MCF 10A (cell line): ENCODE measurements at regions of chr12 and their contacts with region 1.

Region 1: DNA sequence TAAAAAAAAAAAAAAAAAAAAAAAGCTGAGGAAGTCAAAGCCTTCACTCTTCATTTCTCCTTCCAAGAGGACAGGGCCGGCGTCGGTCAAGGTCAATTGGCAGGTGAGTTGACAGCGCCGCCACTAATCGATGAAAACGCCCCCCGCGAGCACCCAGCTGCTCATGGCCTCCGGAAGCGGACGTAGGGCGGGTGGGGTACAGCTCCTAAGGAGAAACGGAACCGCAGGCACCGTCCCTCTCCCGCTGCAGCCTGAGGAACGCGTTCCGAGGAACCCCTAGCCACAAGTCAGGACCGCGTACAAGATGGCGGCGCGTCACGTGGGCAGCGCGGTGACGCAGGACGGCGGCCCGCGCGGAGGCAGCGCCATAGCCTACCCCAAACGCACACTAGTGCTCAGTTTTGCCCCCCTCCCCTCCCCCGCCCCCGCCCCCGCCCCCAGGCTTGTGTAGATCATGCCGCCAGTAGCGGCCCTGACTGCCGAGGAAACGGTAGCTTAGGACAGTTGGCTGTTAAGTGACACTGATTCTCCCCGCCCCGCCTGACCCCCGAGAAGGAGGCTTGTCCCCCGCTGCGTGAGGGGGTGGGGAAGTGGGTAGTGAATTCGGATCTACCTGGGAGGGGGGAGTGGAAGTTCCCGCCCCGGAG is at the start of gene ATF1:
- DNase-seq: peak; percentile 90
- H3K4me3 Mint-ChIP-seq: peak within 1 kb of the TSS; percentile 87
- H3K27ac Mint-ChIP-seq: peak within 1 kb of the TSS; percentile 99
- H3K4me1 Mint-ChIP-seq: peaks cover 20% of the 10 kb centered on the region
- H3K27me3 Mint-ChIP-seq: no peaks in the 10 kb centered on the region
- CTCF ChIP-seq: no peak
- total RNA-seq, gene ATF1: 73.1 and 87.2 TPM in 2 replicates

Region 2: DNA sequence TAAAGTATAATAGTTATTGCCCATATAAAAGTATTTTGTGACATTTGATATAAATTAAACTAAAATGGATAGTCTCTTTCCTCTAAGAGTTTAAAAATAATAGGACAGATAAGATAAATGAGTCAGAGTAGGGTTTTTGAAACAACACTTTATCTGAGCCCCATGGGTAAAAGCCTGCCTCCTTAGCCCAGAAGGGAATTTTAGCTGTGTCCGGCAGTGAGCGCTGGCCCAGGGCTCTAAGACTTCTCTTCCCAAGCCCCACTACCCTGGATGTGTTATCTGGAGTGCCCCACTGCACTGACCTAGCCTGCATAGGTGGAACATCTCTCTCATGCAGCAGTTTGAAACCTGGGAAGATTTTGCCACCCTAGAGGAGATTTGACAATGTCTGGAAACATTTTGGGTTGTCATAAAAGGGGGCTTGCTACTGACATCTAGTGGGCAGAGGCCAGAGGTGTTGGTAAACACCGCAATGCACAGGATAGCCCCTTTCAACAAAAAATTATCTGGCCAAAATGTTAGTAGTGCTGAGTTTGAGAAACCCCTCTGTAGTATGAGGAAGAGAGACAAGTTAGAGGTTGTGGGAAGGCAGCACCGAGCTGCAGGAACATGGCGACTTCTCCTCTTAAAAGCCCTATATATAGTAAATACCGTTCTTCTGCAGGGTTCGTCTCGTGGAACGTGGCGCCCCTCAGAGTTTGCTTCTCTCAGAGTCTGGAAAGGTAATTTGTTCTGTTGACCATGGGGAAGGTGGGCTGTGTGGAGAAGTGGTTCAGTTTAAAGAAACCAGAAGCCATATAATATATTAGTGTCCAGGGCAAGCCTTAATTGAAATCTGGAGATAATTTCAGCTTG is 29.1 kb before region 1 on chr12:
- CTCF ChIA-PET with region 1: no interaction called
- POLR2A ChIA-PET with region 1: interaction called, 19 read pairs
- intact Hi-C with region 1: no loop called
- DNase-seq: peak; percentile 51
- H3K4me3 Mint-ChIP-seq: no peak overlapping the region
- H3K27ac Mint-ChIP-seq: no peak overlapping the region
- H3K4me1 Mint-ChIP-seq: peaks cover 14% of the 10 kb centered on the region
- H3K27me3 Mint-ChIP-seq: no peaks in the 10 kb centered on the region
- CTCF ChIP-seq: peak; percentile 59

Region 3: GRCh38 chr12:50786498-50787231 is 22.9 kb after region 1 on chr12:
- CTCF ChIA-PET with region 1: interaction called, 24 read pairs
- POLR2A ChIA-PET with region 1: interaction called, 149 read pairs
- intact Hi-C with region 1: no loop called
- DNase-seq: peak; percentile 98
- H3K4me3 Mint-ChIP-seq: peak overlapping the region; percentile 9
- H3K27ac Mint-ChIP-seq: peak overlapping the region; percentile 96
- H3K4me1 Mint-ChIP-seq: peaks cover 63% of the 10 kb centered on the region
- H3K27me3 Mint-ChIP-seq: no peaks in the 10 kb centered on the region
- CTCF ChIP-seq: no peak

Region 4: GRCh38 chr12:50820177-50820576 is 56.4 kb after region 1 on chr12:
- CTCF ChIA-PET with region 1: interaction called, 41 read pairs
- POLR2A ChIA-PET with region 1: interaction called, 43 read pairs
- intact Hi-C with region 1: loop called (anchors 1 kb)
- DNase-seq: no peak
- H3K4me3 Mint-ChIP-seq: no peak overlapping the region
- H3K27ac Mint-ChIP-seq: no peak overlapping the region
- H3K4me1 Mint-ChIP-seq: peaks cover 5% of the 10 kb centered on the region
- H3K27me3 Mint-ChIP-seq: no peaks in the 10 kb centered on the region
- CTCF ChIP-seq: no peak

Region 5: DNA sequence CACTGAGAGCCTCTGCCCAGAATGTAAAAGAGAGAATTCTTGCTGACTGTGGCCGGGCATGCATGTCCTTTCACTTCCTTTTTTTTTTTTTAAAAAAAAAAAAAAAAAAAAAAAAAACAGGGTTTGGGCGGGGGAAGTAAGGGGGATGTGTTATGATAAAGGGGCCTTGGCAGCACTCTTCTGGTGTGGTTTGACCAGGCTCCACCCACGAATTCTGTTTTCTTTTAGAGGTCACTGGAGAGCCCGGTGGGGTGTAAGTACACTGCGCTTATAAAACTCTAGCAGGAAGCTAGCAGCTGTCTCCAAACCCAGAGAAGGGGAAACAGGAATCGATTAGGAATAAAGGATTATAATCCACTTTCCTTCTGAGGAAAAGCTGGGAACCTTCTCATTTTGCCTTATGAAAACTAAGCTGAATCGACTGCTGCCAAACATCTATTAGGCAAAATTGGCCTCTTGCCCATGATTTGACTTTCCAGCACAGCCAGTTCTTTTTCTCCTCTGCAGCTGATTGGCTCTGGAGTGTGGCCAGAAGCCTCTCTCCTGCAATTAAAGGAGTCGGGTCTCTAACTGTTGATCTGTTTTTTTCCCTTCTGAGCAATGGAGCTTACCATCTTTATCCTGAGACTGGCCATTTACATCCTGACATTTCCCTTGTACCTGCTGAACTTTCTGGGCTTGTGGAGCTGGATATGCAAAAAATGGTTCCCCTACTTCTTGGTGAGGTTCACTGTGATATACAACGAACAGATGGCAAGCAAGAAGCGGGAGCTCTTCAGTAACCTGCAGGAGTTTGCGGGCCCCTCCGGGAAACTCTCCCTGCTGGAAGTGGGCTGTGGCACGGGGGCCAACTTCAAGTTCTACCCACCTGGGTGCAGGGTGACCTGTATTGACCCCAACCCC is 160.9 kb after region 1 on chr12:
- CTCF ChIA-PET with region 1: interaction called, 10 read pairs
- POLR2A ChIA-PET with region 1: interaction called, 37 read pairs
- intact Hi-C with region 1: loop called (anchors 10 kb)
- DNase-seq: peak; percentile 97
- H3K4me3 Mint-ChIP-seq: peak overlapping the region; percentile 96
- H3K27ac Mint-ChIP-seq: peak overlapping the region; percentile 93
- H3K4me1 Mint-ChIP-seq: peaks cover 33% of the 10 kb centered on the region
- H3K27me3 Mint-ChIP-seq: no peaks in the 10 kb centered on the region
- CTCF ChIP-seq: no peak

Region 6: DNA sequence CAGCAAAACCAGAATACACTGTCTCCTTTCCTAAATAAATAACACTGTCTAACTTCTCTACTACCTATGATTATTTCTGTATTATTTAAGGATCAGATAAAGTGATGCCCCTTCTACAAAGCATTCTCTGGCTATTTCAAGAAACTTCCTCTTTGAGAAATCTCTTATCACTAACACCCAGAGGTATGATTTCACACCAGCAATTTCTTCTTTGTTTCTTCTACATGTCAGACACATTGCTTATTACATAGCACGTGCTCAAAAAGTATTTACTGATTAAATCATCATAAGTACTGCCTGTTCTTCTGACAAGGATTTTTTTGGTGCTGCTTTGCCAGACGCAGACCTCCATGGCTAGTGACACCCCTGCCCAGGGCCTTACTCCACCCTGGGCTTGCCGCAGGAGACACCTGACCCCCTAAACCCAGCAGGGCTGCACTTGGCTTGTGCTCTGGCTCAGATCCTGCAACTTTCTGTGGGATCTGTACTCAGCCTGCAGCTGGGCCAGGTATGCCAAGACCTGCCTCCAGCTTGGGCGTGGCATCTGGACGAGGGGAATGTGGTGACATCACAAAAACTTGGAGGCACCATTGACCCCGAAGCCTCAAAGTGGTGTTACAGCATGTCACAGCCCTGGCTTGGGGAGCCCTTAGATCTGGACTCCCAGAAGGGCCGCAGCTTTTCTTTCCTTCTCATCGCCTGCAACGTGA is 173.2 kb after region 1 on chr12:
- CTCF ChIA-PET with region 1: no interaction called
- POLR2A ChIA-PET with region 1: no interaction called
- intact Hi-C with region 1: no loop called
- DNase-seq: no peak
- H3K4me3 Mint-ChIP-seq: no peak overlapping the region
- H3K27ac Mint-ChIP-seq: peak overlapping the region; percentile 20
- H3K4me1 Mint-ChIP-seq: peaks cover 33% of the 10 kb centered on the region
- H3K27me3 Mint-ChIP-seq: no peaks in the 10 kb centered on the region
- CTCF ChIP-seq: no peak

Region 7: GRCh38 chr12:51047655-51048540 is 284.1 kb after region 1 on chr12 and contains the start of gene LETMD1:
- CTCF ChIA-PET with region 1: interaction called, 3 read pairs
- POLR2A ChIA-PET with region 1: interaction called, 12 read pairs
- intact Hi-C with region 1: loop called (anchors 5 kb)
- DNase-seq: peak; percentile 99
- H3K4me3 Mint-ChIP-seq: peak within 1 kb of the TSS; percentile 94
- H3K27ac Mint-ChIP-seq: peak within 1 kb of the TSS; percentile 93
- H3K4me1 Mint-ChIP-seq: peaks cover 7% of the 10 kb centered on the region
- H3K27me3 Mint-ChIP-seq: no peaks in the 10 kb centered on the region
- CTCF ChIP-seq: peak; percentile 90
- total RNA-seq, gene LETMD1: 60.5 and 65.8 TPM in 2 replicates